Posterior vena cava (tissue), 2 donors: ENCODE measurements at regions of chr2 and their contacts with region 1.

Region 1: GRCh38 chr2:28958689-28959088 is 22.4 kb upstream of the TOGARAM2 start:
- DNase-seq: no peak

Region 2: GRCh38 chr2:29834624-29835023 is 875.9 kb after region 1 on chr2:
- intact Hi-C with region 1: loop called in 1 of 2 experiments (anchors 5 kb)
- DNase-seq: no peak